Activated T-helper 1 cell treated with anti-CD3 and anti-CD28 coated beads, Interleukin-12 subunit alpha, Interleukin-12 subunit beta, Interleukin-2, Interleukin-4 antibody, amounts not matched to agents 30 ng/mL and 10 ng/mL and 1 ng/mL, durations not matched to agents 14 hours and 24 hours and 36 hours (primary cell): ENCODE measurements at regions of chr3 and their contacts with region 1.

Region 1: DNA sequence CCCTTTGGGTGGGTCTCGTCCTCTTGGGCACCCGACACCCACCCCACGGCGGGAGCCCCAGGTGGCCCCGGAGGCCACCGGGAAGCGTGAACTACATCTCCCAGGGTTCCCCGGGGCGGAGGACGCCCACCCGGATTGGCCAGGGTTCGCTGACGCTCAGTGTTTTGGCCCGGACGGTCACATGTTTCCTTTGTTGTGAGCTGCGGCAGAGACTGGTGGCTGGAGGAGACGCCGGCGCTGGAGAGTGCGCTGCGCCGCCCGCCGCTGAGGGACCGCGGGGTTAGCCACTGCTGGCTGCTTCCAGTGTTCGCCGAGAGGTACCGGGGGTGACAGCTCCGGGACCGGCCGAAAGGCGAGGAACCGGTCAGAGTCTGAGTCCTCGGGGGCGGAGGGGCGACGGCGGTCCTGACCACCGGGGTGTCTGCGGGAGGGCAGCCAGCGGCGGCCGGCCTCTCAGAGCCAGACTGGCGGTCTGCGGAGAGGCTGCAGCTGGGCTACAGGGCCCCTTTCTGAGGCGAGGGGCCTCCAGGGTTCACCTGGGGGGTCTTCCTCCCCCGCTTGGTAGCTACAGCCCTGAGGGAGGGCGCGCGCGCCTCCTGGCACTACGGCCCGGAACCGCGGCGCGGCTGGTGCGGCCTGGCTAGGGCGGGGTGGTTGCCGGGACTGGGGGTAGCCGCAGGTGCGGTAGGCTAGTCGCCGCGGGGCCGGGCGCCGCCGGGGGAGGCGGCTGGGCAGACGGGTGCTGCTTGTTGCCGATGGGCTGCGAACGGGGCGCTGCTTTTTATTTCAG is at the start of gene KLHL24:
- DNase-seq: peak; percentile 89
- H3K4me3 Mint-ChIP-seq: peak within 1 kb of the TSS; percentile 92
- H3K27ac Mint-ChIP-seq: peak within 1 kb of the TSS; percentile 97
- H3K4me1 Mint-ChIP-seq: peaks cover 24% of the 10 kb centered on the region
- H3K27me3 Mint-ChIP-seq: peaks cover 2% of the 10 kb centered on the region
- total RNA-seq, gene KLHL24: 8.2 and 8.7 TPM in 2 replicates

Region 2: DNA sequence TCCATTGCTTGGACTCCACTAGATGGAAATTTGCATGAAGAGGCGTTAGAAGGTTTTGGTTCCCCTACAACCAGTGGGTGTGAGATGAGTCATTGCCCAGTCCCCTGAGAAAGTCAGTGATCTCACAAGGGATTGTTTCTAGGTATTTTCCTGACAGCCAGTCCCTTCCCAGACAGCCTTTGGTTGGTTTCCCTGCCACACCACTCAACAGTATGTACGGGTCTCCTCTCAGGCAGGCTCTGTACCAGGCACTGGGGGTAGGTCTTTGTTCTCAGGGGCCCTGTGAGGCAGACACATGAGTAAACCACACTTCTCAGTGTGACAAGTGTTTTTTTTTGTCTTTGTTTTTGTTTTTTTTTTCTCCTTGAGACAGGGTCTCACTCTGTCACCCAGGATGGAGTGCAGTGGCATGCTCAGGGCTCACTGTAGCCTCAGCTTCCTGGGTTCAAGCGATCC is 477.0 kb before region 1 on chr3:
- intact Hi-C with region 1: loop called (anchors 1 kb)
- DNase-seq: peak; percentile 33
- H3K4me3 Mint-ChIP-seq: peak overlapping the region; percentile 45
- H3K27ac Mint-ChIP-seq: peak overlapping the region; percentile 73
- H3K4me1 Mint-ChIP-seq: peaks cover 48% of the 10 kb centered on the region
- H3K27me3 Mint-ChIP-seq: no peaks in the 10 kb centered on the region

Region 3: DNA sequence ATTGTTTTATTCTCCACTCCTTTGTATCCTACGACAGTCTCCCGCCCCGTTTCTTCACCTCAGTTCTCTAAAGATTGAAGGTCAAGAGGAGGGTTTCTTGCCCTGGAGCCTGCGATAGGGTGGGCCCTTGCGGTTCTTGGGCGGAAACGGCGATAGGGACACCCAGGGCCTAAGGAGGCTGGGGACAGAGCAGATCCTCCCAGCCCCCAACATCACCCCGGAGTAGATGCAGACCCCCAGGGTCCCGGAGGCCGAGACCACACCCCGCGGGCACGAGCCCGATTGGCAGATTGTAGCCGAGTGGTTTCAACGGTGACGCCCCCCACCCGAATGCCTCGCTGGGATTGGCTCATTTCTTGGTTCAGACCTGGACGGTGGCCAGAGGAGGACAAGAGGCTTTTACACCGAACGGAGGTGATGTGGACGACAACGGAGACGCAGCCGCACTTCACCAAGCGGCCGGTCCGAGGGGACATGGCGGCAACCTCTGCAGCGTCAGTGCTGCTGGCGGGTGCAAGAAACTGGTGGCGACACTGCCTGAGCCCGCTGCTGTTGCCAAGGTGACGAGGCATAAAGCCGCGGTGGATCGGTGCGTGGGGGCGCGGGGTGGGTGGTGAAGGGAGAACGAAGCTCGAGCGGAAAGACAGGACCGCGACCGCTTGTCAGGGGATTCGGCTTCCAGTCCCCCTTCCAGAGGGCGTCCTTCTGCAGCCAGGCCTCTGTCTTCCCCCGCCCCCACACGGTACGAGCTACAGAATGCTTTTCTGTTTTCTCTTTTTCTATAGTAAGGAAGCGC is 188.2 kb before region 1 on chr3:
- intact Hi-C with region 1: loop called (anchors 5 kb)
- DNase-seq: peak; percentile 75
- H3K4me3 Mint-ChIP-seq: peak overlapping the region; percentile 94
- H3K27ac Mint-ChIP-seq: peak overlapping the region; percentile 86
- H3K4me1 Mint-ChIP-seq: peaks cover 22% of the 10 kb centered on the region
- H3K27me3 Mint-ChIP-seq: peaks cover 8% of the 10 kb centered on the region

Region 4: GRCh38 chr3:183555541-183556081 is 80.0 kb before region 1 on chr3 and contains the start of gene KLHL6:
- intact Hi-C with region 1: loop called (anchors 1 kb)
- DNase-seq: peak; percentile 71
- H3K4me3 Mint-ChIP-seq: peak within 1 kb of the TSS; percentile 97
- H3K27ac Mint-ChIP-seq: peak within 1 kb of the TSS; percentile 100
- H3K4me1 Mint-ChIP-seq: peaks cover 57% of the 10 kb centered on the region
- H3K27me3 Mint-ChIP-seq: no peaks in the 10 kb centered on the region
- total RNA-seq, gene KLHL6: 38.6 and 40.6 TPM in 2 replicates

Region 5: DNA sequence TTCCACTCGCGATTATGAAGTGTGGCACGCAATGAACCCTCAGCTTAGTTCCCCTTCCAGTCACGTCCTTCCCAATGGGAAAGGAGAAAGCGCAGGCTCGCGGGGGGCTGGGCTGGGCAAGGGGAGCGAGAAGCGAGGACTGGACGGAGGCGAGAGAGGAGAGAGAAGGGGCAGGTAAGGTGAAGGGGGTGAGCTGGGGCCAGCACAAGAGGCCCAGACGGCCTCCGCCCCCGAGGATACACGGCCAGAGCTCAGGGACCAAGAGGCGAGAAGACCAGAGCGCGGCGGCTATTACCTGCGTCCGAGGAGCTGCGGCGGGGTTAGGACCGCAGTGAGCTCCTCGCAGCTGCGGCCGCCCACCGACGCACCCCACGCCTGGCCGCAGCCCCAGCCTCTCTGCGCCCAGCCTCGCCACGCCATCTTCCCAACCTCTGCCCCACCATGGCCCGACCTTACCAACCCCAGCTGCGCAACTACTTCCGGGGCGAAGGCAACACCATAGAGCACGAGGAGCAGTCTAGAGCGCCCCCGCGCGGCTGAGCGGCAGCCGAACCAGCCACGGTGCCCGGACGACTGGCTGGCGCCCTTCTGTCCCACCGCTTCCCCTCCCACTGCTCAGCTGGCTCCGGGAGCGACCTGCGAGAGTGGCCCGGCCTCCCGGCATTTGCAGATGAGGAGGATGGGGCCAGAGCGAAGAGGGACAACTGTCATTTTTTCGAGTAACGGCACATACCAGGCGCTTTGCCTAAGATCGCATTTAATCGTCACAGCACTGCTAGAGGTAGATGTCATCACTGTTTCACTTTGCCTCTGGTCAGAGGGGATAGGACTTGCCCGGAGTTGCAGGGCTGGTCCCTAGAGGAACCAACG is 249.0 kb after region 1 on chr3 and contains the start of gene PARL:
- intact Hi-C with region 1: loop called (anchors 1 kb)
- DNase-seq: peak; percentile 93
- H3K4me3 Mint-ChIP-seq: peak within 1 kb of the TSS; percentile 98
- H3K27ac Mint-ChIP-seq: peak within 1 kb of the TSS; percentile 99
- H3K4me1 Mint-ChIP-seq: peaks cover 35% of the 10 kb centered on the region
- H3K27me3 Mint-ChIP-seq: no peaks in the 10 kb centered on the region
- total RNA-seq, gene PARL: 93.7 and 98.2 TPM in 2 replicates

Region 6: GRCh38 chr3:183912895-183913579 is 277.4 kb after region 1 on chr3:
- intact Hi-C with region 1: no loop called
- DNase-seq: no peak
- H3K4me3 Mint-ChIP-seq: no peak overlapping the region
- H3K27ac Mint-ChIP-seq: no peak overlapping the region
- H3K4me1 Mint-ChIP-seq: no peaks in the 10 kb centered on the region
- H3K27me3 Mint-ChIP-seq: peaks cover 5% of the 10 kb centered on the region

Region 7: GRCh38 chr3:184174646-184175492 is 539.2 kb after region 1 on chr3 and contains the start of gene AP2M1:
- intact Hi-C with region 1: loop called (anchors 1 kb)
- DNase-seq: peak; percentile 99
- H3K4me3 Mint-ChIP-seq: peak within 1 kb of the TSS; percentile 95
- H3K27ac Mint-ChIP-seq: peak within 1 kb of the TSS; percentile 85
- H3K4me1 Mint-ChIP-seq: peaks cover 28% of the 10 kb centered on the region
- H3K27me3 Mint-ChIP-seq: no peaks in the 10 kb centered on the region
- total RNA-seq, gene AP2M1: 235 and 238 TPM in 2 replicates

Region 8: GRCh38 chr3:184362668-184363540 is 727.3 kb after region 1 on chr3:
- intact Hi-C with region 1: loop called (anchors 5 kb)
- DNase-seq: peak; percentile 96
- H3K4me3 Mint-ChIP-seq: peak overlapping the region; percentile 100
- H3K27ac Mint-ChIP-seq: peak overlapping the region; percentile 99
- H3K4me1 Mint-ChIP-seq: peaks cover 21% of the 10 kb centered on the region
- H3K27me3 Mint-ChIP-seq: peaks cover 10% of the 10 kb centered on the region